ENCODE measurements at regions of chr5 and their contacts with region 1.

Region 1: DNA sequence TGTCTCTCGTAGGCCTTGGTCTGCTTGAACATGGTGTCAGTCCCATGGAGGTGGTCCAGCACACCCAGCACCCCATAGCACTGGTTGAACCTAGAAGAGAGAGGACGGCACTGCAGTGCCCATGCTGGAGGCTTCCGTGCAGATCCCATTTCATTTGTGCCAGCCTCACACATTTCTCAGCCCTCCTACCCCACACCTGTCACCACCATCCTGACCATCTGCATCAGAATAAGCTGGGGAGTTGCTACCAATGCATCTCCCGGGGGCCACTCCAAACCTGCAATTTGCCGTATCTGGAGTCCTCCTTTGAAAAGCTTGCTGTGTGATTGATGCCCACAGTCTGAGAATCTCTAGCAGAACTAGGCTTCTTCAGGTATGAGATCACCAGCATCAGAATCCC is 30.0 kb downstream of the FAXDC2 start:
- DNase-seq: no peak
- H3K4me3 ChIP-seq: no peak overlapping the region
- H3K27ac ChIP-seq: no peak overlapping the region
- H3K4me1 ChIP-seq: no peaks in the 10 kb centered on the region
- H3K27me3 ChIP-seq: no peaks in the 10 kb centered on the region
- CTCF ChIP-seq: no peak

Region 2: DNA sequence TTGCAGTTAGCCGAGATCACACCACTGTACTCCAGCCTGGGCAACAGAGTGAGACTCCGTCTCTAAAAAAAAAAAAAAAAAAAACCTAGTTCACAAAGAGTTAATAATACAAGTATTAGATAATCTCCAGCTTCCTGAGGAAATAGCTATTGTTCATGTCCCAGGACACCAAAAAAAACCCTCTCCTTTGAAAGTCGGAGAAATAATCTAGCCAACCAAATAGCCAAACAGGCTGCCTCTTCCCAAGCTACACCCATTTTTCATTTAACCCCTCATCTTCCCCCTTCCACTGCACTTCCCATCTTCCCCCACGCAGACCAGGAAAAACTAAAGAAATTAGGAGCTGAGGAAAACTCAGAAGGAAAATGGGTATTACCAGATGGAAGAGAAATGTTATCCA is 61.6 kb after region 1 on chr5:
- CTCF ChIA-PET with region 1: no interaction called
- dilution Hi-C with region 1: loop called (anchors 5 kb)
- in situ Hi-C with region 1: no loop called
- intact Hi-C with region 1: no loop called
- DNase-seq: no peak
- H3K4me3 ChIP-seq: no peak overlapping the region
- H3K27ac ChIP-seq: no peak overlapping the region
- H3K4me1 ChIP-seq: no peaks in the 10 kb centered on the region
- H3K27me3 ChIP-seq: no peaks in the 10 kb centered on the region
- CTCF ChIP-seq: no peak

Region 3: DNA sequence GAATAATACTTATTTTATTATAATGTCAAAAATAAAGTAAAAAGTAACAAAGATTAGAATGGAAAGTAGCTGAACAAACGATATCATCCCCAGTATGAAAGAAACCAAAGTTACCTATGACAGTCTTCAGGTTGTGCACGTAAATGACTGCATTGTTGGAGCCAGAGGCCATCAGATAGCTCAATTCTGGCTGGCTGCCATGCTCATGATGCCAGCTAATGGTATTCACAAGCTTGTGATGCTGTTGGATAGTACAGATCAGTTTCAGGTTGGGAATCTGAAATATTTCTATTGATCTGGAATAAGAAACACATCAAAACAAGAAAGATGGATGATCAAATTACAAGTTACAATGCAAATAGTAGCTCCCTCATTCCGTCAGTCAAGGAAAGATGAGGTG is 96.5 kb after region 1 on chr5:
- CTCF ChIA-PET with region 1: no interaction called
- dilution Hi-C with region 1: loop called (anchors 5 kb)
- in situ Hi-C with region 1: no loop called
- intact Hi-C with region 1: no loop called
- DNase-seq: peak; percentile 37
- H3K4me3 ChIP-seq: no peak overlapping the region
- H3K27ac ChIP-seq: no peak overlapping the region
- H3K4me1 ChIP-seq: no peaks in the 10 kb centered on the region
- H3K27me3 ChIP-seq: no peaks in the 10 kb centered on the region
- CTCF ChIP-seq: no peak